ENCODE measurements at regions of chr3 and their contacts with region 1.

Region 1: GRCh38 chr3:42880601-42881451 is 5.1 kb upstream of the CYP8B1 start:
- DNase-seq: peak; percentile 85
- H3K4me3 ChIP-seq: peak overlapping the region; percentile 78
- H3K27ac ChIP-seq: no peak overlapping the region
- H3K4me1 ChIP-seq: no peaks in the 10 kb centered on the region
- H3K27me3 ChIP-seq: no peaks in the 10 kb centered on the region
- CTCF ChIP-seq: peak; percentile 87

Region 2: GRCh38 chr3:42581709-42582473 is 298.9 kb before region 1 on chr3 and contains the start of gene SEC22C:
- intact Hi-C with region 1: loop called (anchors 10 kb)
- DNase-seq: peak; percentile 94
- H3K4me3 ChIP-seq: peak within 1 kb of the TSS; percentile 81
- H3K27ac ChIP-seq: peak within 1 kb of the TSS; percentile 81
- H3K4me1 ChIP-seq: peaks cover 4% of the 10 kb centered on the region
- H3K27me3 ChIP-seq: no peaks in the 10 kb centered on the region
- CTCF ChIP-seq: no peak
- total RNA-seq, gene SEC22C: 17.1 to 17.5 TPM

Region 3: DNA sequence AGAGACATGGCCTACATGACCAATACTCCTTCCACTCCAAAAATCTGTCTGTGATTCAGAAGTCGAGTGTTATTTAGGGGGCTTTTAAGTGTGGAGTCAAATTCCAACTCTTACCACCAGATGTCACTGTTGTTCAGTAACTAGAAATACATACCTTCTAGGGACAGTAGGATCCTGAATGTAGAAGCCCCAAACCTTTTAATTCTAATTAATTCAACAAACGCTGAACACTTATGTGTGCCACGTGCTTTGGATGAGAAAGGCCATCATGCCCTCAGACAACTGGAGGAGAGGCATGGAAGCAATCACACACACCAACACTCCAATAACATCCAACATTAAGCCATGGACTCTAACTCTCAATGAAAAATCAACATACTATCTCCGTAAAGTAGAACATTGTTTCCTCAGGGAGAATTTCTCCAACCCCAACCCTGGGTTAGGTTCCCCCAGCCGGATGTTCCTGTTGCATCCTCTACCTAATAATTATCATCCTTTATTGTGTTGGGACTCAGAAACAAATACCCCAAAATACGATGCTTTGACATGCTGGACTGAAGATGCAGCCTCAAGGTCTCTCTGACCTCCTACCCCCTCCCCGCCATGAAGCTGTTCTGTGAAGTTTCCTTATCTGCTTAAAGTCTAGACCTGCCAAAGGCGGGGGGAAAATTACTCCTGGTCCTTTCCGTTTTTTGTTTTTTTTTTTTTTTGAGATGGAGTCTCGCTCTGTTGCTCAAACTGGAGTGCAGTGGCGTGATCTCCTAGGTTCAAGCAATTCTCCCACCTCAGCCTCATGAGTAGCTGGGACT is 99.7 kb before region 1 on chr3:
- intact Hi-C with region 1: loop called (anchors 5 kb)
- DNase-seq: peak; percentile 52
- H3K4me3 ChIP-seq: no peak overlapping the region
- H3K27ac ChIP-seq: no peak overlapping the region
- H3K4me1 ChIP-seq: no peaks in the 10 kb centered on the region
- H3K27me3 ChIP-seq: no peaks in the 10 kb centered on the region
- CTCF ChIP-seq: peak; percentile 77

Region 4: DNA sequence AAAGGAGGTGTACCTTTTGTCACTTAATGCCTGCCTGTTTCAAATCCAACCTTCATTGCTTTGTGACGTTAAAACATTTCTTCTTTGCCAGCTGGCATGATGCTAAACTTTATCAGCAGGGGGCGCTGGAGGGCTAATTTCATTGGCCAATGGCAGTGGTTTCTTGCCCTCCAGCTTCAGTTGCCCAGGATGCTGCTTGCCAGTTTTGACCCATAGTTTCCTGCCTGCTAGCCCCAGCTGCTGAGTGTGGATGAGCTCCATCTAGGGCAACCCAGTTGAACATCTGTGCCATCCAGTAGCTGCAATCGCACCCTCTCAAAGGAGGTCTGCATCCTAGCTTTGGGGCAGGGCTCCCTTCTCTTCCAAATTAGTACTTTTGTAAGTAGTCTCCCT is 49.5 kb before region 1 on chr3:
- intact Hi-C with region 1: loop called (anchors 5 kb)
- DNase-seq: peak; percentile 90
- H3K4me3 ChIP-seq: no peak overlapping the region
- H3K27ac ChIP-seq: no peak overlapping the region
- H3K4me1 ChIP-seq: no peaks in the 10 kb centered on the region
- H3K27me3 ChIP-seq: no peaks in the 10 kb centered on the region
- CTCF ChIP-seq: peak; percentile 75

Measured in colonic mucosa (tissue), 4 donors.